ENCODE measurements at regions of chr1 and their contacts with region 1.

Region 1: GRCh38 chr1:206935491-206936067 is 10.7 kb downstream of the PIGR start:
- DNase-seq: peak; percentile 41
- ATAC-seq: no peak
- H3K4me3 Mint-ChIP-seq: no peak overlapping the region
- H3K27ac Mint-ChIP-seq: no peak overlapping the region
- H3K4me1 Mint-ChIP-seq: peaks cover 34% of the 10 kb centered on the region
- H3K27me3 Mint-ChIP-seq: no peaks in the 10 kb centered on the region
- CTCF ChIP-seq: no peak

Region 2: DNA sequence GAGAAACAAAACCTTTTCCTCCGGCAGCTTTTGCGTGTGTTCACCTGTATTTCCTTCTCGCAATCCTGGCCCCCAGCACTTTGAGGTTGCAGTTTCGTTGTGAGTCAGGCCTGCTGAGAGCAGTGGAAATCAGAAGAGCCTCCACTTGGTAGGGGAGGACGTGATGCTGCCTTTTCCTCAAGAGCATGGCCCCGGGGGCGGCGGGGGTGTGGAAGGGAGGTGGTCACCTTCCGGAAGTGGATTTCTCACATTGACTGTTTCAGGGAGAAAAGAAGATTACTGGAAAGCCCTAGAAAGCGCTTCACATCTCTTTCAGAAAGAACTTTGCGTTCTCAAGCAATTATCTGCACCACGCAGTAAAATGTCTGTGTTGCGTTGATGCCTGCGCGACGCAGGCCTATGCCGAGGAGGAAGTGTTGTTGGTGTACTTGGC is 151.1 kb before region 1 on chr1:
- CTCF ChIA-PET with region 1: no interaction called
- POLR2A ChIA-PET with region 1: no interaction called
- intact Hi-C with region 1: no loop called
- DNase-seq: no peak
- ATAC-seq: peak; percentile 58
- H3K4me3 Mint-ChIP-seq: peak overlapping the region; percentile 77
- H3K27ac Mint-ChIP-seq: peak overlapping the region; percentile 88
- H3K4me1 Mint-ChIP-seq: peaks cover 52% of the 10 kb centered on the region
- H3K27me3 Mint-ChIP-seq: no peaks in the 10 kb centered on the region
- CTCF ChIP-seq: no peak

Region 3: DNA sequence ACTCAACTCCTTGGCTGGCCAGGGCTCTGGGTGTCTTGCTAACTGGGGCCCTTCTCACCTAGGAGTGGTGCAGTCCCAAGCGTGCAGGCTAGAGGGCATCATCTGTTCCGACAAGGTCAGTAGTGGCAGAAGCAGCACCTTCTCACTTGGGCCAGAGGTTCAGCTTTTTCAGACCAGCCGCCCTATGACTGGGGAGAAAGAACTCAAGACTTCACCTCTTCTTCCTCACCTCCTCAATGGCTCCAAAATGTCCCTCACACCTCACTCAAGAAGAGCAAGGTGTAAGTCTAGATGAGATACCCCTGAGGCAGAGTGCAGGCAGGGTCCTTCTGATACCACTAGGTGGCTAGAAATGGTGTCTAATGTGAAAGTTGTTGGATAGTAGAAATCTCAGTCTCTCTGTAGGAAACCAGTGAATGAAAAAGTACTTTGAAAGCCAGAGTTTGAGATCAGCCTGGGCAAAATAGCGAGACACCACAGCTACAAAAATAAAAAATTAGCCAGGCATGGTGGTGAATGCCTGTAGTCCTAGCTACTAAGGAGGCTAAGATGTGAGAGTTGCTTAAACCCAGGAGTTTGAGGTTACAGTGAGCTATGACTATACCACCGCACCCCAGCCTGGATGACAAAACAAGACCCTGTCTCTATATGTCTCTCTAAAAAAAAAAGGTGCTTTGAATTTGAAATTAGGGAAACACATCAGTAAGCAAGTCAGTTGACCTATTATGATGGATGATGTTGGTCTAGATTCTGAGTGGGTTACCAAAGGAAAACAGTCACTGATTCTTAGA is 78.7 kb before region 1 on chr1:
- CTCF ChIA-PET with region 1: interaction called, 16 read pairs
- POLR2A ChIA-PET with region 1: interaction called, 4 read pairs
- intact Hi-C with region 1: loop called (anchors 2 kb)
- DNase-seq: no peak
- ATAC-seq: peak; percentile 78
- H3K4me3 Mint-ChIP-seq: no peak overlapping the region
- H3K27ac Mint-ChIP-seq: no peak overlapping the region
- H3K4me1 Mint-ChIP-seq: peaks cover 6% of the 10 kb centered on the region
- H3K27me3 Mint-ChIP-seq: peaks cover 12% of the 10 kb centered on the region
- CTCF ChIP-seq: no peak

Region 4: DNA sequence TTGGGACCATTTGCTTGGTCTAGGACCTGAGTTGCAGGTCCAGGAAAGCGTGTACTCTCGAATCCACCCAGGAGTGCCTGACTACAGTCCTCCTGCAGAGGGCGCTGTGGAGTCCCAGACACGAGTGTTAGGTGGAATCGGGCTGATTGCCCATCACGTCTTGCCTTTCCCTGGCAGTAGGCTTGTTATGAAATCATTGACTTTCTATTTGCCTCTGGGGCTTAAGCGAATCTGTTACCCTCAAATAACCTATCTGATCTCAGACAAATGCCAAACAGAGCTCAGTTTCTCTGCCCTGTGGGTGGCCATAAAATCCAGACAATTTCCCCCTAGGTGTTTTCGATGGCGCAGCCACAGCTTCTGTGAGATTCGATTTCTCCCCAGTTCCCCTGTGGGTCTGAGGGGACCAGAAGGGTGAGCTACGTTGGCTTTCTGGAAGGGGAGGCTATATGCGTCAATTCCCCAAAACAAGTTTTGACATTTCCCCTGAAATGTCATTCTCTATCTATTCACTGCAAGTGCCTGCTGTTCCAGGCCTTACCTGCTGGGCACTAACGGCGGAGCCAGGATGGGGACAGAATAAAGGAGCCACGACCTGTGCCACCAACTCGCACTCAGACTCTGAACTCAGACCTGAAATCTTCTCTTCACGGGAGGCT is 70.4 kb before region 1 on chr1 and contains the start of gene IL20:
- CTCF ChIA-PET with region 1: interaction called, 47 read pairs
- POLR2A ChIA-PET with region 1: interaction called, 4 read pairs
- intact Hi-C with region 1: loop called (anchors 1 kb)
- DNase-seq: peak; percentile 72
- ATAC-seq: peak; percentile 90
- H3K4me3 Mint-ChIP-seq: no peak within 1 kb of the TSS
- H3K27ac Mint-ChIP-seq: no peak within 1 kb of the TSS
- H3K4me1 Mint-ChIP-seq: peaks cover 6% of the 10 kb centered on the region
- H3K27me3 Mint-ChIP-seq: peaks cover 26% of the 10 kb centered on the region
- CTCF ChIP-seq: peak; percentile 43
- total RNA-seq, gene IL20: not detected in 2 replicates

Region 5: DNA sequence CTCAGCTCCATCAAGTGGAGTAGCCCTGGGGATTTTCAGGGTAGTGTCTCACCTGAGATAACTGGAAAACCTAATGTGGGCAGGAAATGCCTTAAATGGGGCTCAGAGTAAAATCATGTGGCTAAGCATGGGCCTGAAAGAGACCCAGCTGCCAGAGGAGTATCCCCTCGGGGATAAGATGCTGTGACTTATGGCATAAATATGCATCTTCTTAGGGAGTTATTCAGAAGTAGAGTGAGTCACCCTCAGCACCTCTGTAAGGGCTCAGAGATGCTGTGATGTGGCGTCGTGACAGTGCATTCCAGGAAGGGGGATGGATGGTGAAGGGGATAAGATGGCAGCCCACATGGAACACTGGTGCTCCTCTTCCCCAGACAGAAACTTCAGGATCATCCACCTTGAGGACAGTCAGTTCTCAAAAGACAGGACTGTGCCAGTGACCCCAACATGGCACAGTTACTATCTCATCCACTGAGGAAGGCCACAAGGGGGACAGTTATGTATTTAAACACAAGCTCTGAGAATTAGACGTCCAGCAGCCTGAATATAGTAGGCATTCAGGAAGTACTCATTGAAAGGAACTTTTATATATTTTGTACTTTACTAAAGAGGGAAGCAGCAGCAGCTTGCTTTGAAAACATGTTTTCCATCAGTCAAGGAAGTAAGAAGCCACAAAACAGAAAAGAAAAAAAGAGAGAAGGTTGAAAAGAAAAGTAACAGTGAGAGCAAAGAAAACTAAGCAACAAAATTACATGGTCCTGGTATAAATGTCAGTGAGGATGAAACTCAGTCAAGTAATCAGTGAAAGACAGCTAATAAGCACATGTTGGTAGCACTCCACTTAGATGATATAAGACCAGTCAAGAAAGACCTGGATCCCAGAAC is 30.1 kb before region 1 on chr1:
- CTCF ChIA-PET with region 1: interaction called, 41 read pairs
- POLR2A ChIA-PET with region 1: interaction called, 22 read pairs
- intact Hi-C with region 1: no loop called
- DNase-seq: no peak
- ATAC-seq: peak; percentile 93
- H3K4me3 Mint-ChIP-seq: peak overlapping the region; percentile 36
- H3K27ac Mint-ChIP-seq: peak overlapping the region; percentile 89
- H3K4me1 Mint-ChIP-seq: peaks cover 77% of the 10 kb centered on the region
- H3K27me3 Mint-ChIP-seq: no peaks in the 10 kb centered on the region
- CTCF ChIP-seq: no peak